ENCODE measurements at regions of chr7 and their contacts with region 1.

Region 1: GRCh38 chr7:72493850-72494661 is 81.9 kb upstream of the CALN1 start:
- DNase-seq: peak; percentile 71

Region 2: DNA sequence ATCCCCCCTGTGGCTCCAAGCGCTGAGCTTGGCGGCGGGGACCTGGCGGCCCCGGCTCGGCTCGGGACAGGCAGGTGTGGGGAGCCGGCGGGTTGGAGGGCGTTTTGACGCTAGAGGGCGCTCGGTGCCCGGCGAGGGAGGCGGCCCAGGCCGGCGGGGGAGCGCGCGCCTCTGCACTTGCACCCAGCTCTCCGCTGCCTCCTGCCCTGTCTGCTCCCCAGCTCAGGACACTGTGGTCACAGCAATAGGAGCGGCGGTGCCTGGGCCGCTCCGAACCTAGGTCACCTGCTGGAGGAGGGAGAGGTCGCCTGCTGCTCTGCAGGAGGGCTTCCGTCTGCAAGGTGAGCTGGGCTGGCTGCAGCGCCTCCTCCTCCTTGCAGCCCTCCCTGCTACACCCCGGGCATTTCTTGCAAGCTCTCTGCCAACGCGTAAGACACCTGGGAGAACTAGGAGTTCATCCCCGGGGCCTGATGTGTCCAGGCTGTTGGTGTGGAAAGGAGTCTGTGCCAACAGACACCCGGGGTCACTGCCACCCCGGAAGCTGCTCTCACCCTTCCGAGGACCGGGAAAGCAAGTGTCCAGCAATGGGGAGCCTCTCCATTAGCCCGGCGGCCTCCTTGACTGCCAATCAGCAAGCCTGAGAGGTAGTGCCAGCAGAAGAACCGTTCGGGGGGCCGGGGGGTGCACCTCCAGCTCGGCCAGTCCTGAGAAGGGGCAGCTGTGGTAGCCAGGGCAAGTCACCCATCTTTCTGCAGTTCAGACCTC is 741.7 kb before region 1 on chr7:
- intact Hi-C with region 1: loop called (anchors 10 kb)
- DNase-seq: no peak

Region 3: DNA sequence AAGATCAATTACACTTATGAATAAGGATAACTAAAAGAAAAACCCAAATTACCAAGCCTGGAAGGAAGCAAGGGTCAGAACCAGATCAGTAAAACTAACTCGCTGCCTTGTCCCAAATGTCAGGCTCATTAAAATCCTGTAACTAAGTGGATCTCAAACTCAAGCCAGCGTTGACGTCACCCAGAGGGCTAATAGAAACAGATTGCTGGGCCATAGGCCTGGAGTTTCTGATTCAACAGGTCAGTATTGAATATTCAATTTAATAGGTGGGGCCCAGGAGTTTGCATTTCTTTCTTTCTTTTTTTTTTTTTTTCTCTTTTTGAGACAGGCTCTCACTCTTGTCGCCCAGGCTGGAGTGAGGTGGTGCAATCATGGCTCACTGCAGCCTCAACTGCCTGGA is 478.9 kb before region 1 on chr7:
- intact Hi-C with region 1: no loop called
- DNase-seq: no peak

Region 4: GRCh38 chr7:72435366-72435765 is 58.7 kb before region 1 on chr7:
- intact Hi-C with region 1: no loop called
- DNase-seq: no peak

Measured in cardiac septum (tissue), 1 donor.